Naive thymus-derived CD4-positive, alpha-beta T cell (primary cell): ENCODE measurements at regions of chr3 and their contacts with region 1.

Region 1: DNA sequence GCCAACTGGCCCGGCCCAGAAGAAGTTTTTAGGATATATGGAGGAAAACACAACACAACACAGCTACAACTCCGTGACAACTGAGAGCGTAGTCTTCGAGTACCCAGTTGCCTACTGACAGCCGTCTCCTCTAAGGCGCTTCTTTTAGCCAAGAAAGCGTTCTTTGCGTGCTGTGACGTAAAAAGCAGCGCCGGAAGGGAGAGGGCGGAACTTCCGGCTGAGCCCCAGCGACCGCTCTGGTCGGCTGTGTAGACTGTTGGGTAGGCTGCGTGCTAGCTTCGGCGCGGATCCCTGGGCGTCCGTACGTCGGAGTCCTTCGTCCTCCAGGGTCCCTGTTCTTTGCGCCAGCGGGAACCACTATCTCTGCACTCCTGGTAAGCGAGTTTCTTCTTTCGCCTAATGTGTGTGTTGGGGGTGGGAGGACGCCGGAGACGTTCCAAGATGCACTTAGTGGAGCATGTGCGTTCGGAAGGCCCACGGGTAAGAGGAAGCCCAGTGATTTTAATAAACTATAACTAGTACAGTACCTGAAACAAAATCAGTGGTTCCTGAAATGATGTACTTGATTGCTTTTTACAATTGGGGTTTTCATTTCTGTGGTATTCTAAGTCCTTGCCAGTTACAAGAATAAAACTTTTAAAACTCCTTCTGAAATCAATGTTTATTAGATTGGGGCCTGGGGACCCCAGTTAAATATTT is at the start of gene TRMT10C:
- DNase-seq: peak; percentile 77 to 94 (median 91)
- ATAC-seq: peak; percentile 98
- H3K4me3 ChIP-seq: peak within 1 kb of the TSS; percentile 94
- H3K4me3 Mint-ChIP-seq: peak within 1 kb of the TSS; percentile 95 to 99 (median 99)
- H3K27ac ChIP-seq: peak within 1 kb of the TSS; percentile 93
- H3K27ac Mint-ChIP-seq: peak within 1 kb of the TSS; percentile 93 to 99 (median 98)
- H3K4me1 ChIP-seq: peaks cover 8 to 14% of the 10 kb centered on the region in 2 donors
- H3K4me1 Mint-ChIP-seq: peaks cover 19 to 48% (median 38%) of the 10 kb centered on the region in 7 donors
- H3K27me3 ChIP-seq: no peaks in the 10 kb centered on the region
- H3K27me3 Mint-ChIP-seq: peaks cover 2 to 10% (median 3%) of the 10 kb centered on the region in 5 donors
- total RNA-seq, gene TRMT10C: 24.1 to 32.7 (median 27.1) TPM

Region 2: DNA sequence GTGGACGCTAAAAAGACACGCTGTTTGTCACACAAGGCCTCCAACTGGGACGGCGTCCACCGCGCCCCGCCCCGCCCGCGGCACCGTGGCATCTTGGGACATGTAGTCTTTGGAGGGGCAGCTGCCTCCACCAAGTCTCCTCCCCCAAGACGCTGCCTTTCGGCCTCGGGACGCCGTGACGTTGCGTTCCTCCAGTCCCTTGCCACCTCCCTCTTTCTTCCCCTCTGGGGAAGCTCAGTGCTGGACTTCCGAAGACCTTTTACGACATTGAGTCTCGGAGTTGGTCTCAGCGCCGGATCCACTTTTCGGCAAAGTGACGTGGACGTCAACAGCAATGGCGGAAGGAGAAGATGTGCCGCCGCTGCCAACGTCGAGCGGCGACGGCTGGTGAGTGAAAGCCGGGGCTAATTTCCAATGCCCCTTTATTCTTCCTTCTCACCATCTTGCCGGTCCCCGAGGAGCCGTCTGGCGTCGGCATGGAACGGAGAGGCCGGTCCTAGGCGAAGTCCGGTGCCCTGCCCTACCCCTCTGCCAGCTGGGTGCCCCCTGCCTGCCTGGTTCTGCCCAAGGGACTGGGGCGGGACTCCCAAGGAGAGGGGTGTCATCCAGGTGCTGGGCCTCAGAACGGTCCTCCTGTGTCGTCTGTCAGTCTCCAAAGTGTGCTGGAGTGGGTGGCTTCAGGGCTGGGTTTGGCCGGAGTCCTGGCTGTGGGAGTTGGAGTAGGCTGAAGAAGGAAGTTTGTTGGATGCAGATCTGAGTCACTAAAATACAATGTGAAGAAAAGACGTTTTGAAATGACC is 1300.9 kb before region 1 on chr3 and contains the start of gene TBC1D23:
- CTCF ChIA-PET with region 1: no interaction called
- POLR2A ChIA-PET with region 1: no interaction called
- intact Hi-C with region 1: loop called in 1 of 2 experiments (anchors 2 kb)
- DNase-seq: peak; percentile 89 to 98 (median 96)
- ATAC-seq: peak; percentile 99
- H3K4me3 ChIP-seq: peak within 1 kb of the TSS; percentile 92
- H3K4me3 Mint-ChIP-seq: peak within 1 kb of the TSS; percentile 90 to 100 (median 94)
- H3K27ac ChIP-seq: peak within 1 kb of the TSS; percentile 89
- H3K27ac Mint-ChIP-seq: peak within 1 kb of the TSS; percentile 97 to 100 (median 99)
- H3K4me1 ChIP-seq: peaks cover 10 to 20% of the 10 kb centered on the region in 2 donors
- H3K4me1 Mint-ChIP-seq: peaks cover 37 to 75% (median 65%) of the 10 kb centered on the region in 7 donors
- H3K27me3 ChIP-seq: no peaks in the 10 kb centered on the region
- H3K27me3 Mint-ChIP-seq: no peaks in the 10 kb centered on the region
- total RNA-seq, gene TBC1D23: 30.8 to 42.4 (median 33.9) TPM

Region 3: DNA sequence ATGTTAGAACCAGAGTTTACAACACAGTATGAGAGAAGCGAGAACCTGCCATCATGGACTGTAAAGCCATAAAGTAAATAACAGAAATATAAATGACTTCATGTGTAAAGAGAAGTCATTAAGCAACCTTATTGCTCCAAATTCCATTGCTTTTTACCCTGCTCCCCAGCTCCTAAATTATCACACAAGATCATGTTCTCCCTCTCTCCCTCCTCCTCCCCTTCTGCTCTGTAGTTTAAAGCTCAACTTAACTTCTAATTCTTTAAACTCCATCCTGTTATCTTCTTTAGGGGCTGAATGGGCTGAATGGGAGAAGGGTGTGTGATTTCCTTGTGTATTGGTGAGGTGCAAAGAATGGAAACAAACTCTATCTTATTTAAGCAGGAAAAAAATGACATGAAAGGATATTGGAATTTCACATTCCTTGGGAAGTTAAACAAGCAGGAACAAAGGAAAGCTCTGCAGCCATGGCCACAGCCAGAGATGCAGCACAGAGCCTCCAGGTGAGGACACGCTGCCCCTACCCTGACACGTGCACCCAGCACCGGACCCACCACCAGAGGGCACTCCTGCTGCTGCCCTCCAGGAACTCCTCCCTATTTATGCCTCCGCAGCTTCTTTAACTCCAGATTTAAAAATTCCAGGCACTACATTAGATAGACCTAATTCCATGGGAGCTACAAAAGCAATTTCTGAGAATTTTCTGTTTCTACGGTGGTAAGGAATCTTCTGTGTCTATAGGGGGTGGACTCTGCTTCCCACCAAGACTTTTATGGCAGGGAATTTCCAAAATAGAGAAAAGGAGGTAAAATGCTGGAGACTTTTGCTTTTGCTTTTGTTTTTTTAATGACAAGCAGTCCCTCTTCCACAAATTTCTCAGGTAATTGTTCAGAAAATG is 491.6 kb before region 1 on chr3:
- CTCF ChIA-PET with region 1: no interaction called
- POLR2A ChIA-PET with region 1: interaction called, 3 read pairs
- intact Hi-C with region 1: loop called in 1 of 2 experiments (anchors 5 kb)
- DNase-seq: peak; percentile 17 to 60 (median 30)
- ATAC-seq: peak; percentile 66
- H3K4me3 ChIP-seq: no peak overlapping the region
- H3K4me3 Mint-ChIP-seq: no peak overlapping the region
- H3K27ac ChIP-seq: no peak overlapping the region
- H3K27ac Mint-ChIP-seq: peak overlapping the region in 1 of 9 donors; percentile 39
- H3K4me1 ChIP-seq: peaks cover 0 to 4% of the 10 kb centered on the region in 2 donors
- H3K4me1 Mint-ChIP-seq: peaks cover 0 to 4% (median 0%) of the 10 kb centered on the region in 7 donors
- H3K27me3 ChIP-seq: no peaks in the 10 kb centered on the region
- H3K27me3 Mint-ChIP-seq: peaks cover 13 to 25% (median 20%) of the 10 kb centered on the region in 5 donors

Region 4: DNA sequence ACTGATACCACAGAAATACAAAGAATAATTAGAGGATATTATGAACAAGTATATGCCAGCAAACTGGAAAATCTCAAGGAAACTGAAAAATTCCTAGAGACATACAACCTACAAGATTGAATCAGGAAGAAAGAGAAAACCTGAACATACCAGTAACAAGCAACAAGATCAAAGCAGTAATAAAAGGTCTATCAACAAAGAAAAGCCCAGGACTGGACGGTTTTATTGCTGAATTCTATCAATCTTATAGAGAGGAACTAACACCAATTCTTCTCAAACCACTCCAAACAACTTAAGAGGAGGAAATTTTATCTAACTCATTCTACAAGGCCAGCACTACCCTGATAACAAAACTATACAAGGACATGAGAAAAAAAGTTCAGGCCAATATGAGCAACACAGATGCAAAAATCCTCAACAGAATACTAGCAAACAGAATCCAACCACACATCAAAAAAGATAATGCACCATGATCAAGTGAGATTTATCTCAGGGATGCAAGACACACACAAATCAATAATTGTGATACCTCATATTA is 170.3 kb before region 1 on chr3:
- CTCF ChIA-PET with region 1: no interaction called
- POLR2A ChIA-PET with region 1: no interaction called
- intact Hi-C with region 1: loop called in 1 of 2 experiments (anchors 2 kb)
- DNase-seq: no peak
- ATAC-seq: no peak
- H3K4me3 ChIP-seq: no peak overlapping the region
- H3K4me3 Mint-ChIP-seq: peak overlapping the region in 1 of 10 donors; percentile 12
- H3K27ac ChIP-seq: no peak overlapping the region
- H3K27ac Mint-ChIP-seq: peak overlapping the region in 7 of 9 donors; percentile 5 to 71 (median 43)
- H3K4me1 ChIP-seq: peaks cover 0 to 12% of the 10 kb centered on the region in 2 donors
- H3K4me1 Mint-ChIP-seq: peaks cover 20 to 58% (median 49%) of the 10 kb centered on the region in 7 donors
- H3K27me3 ChIP-seq: no peaks in the 10 kb centered on the region
- H3K27me3 Mint-ChIP-seq: no peaks in the 10 kb centered on the region

Region 5: DNA sequence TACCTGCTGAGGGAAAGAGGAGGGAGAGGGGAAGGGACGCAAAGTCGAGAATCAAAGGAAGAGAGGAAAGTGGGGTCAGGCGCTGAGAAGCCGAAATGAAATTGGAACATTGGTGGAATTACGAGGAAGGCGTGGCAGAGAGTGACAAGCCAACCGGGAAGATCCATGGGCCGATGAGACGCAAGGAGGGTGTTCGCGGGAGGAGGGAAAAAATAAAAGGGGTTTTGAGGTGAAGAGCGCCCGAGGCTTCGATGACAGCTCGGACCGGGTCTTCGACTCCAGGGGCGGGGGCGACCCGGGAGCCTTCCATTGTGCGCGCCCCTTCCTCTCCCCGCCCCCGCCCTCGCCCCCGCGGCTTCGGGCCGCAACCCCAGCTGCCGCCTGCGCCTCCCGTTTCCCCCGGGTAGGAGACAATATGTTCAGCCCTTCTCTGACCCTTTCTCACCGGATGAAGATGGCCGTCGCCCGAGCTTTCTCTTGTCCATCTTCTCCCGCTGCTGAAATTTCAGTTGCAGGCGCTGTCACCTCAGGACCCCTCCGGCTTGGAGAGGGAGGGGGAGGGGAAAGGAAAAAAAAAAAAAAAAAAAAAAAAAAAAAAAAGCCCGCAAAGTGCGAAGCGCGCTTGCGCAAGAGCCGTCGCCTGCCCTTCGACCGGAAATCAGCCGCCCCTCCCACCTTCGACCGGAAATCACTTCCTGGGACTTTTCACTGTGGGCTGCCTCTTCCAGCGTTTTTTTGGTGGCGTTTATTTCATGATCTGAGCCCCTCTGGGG is 48.9 kb before region 1 on chr3 and contains the start of gene SENP7:
- CTCF ChIA-PET with region 1: interaction called, 3 read pairs
- POLR2A ChIA-PET with region 1: interaction called, 15 read pairs
- intact Hi-C with region 1: loop called (anchors 1 kb)
- DNase-seq: peak; percentile 55 to 82 (median 76)
- ATAC-seq: peak; percentile 74
- H3K4me3 ChIP-seq: peak within 1 kb of the TSS; percentile 84
- H3K4me3 Mint-ChIP-seq: peak within 1 kb of the TSS; percentile 98 to 100 (median 100)
- H3K27ac ChIP-seq: peak within 1 kb of the TSS; percentile 92
- H3K27ac Mint-ChIP-seq: peak within 1 kb of the TSS; percentile 96 to 100 (median 98)
- H3K4me1 ChIP-seq: peaks cover 24 to 41% of the 10 kb centered on the region in 2 donors
- H3K4me1 Mint-ChIP-seq: peaks cover 35 to 79% (median 70%) of the 10 kb centered on the region in 7 donors
- H3K27me3 ChIP-seq: no peaks in the 10 kb centered on the region
- H3K27me3 Mint-ChIP-seq: peaks cover 0 to 4% (median 0%) of the 10 kb centered on the region in 5 donors
- total RNA-seq, gene SENP7: 28.8 to 79.0 (median 49.5) TPM

Region 6: DNA sequence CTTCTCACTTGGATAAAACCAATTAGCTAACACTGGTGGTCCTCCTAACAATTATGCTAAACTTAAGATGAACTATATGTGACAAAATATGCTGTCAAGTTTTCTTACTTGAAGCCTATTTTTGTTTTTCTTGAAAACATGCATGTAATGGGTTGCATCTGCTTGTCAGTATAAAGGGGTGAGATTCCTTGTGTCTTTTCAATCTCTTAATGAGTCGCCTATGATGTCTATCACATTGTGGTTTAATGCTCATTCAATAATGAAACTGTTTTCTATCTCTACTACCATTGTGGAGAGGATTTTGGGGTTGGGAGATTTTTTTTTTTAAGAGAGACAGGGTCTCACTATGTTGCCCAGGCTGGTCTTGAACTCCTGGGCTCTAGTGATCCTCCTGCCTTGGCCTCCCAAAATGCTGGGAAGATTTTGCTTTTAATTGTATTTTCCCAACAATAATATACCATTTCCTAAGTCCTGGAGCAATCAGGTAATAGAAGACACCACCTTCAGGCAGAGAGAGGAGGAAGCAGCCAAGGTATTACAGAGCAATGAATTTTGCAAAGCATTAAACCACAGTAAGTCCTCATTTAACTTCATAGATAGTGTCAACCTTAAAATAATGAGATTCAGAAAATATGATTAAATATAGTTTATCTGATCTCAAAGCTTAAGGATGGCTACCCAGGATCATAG is 17.5 kb before region 1 on chr3:
- CTCF ChIA-PET with region 1: no interaction called
- POLR2A ChIA-PET with region 1: interaction called, 5 read pairs
- intact Hi-C with region 1: loop called in 1 of 2 experiments (anchors 2 kb)
- DNase-seq: peak in 1 of 9 donors; percentile 10
- ATAC-seq: no peak
- H3K4me3 ChIP-seq: no peak overlapping the region
- H3K4me3 Mint-ChIP-seq: peak overlapping the region in 9 of 10 donors; percentile 1 to 77 (median 36)
- H3K27ac ChIP-seq: peak overlapping the region; percentile 20
- H3K27ac Mint-ChIP-seq: peak overlapping the region; percentile 51 to 95 (median 89)
- H3K4me1 ChIP-seq: peaks cover 20 to 25% of the 10 kb centered on the region in 2 donors
- H3K4me1 Mint-ChIP-seq: peaks cover 17 to 40% (median 31%) of the 10 kb centered on the region in 7 donors
- H3K27me3 ChIP-seq: no peaks in the 10 kb centered on the region
- H3K27me3 Mint-ChIP-seq: no peaks in the 10 kb centered on the region